ENCODE measurements at regions of chr17 and their contacts with region 1.

Region 1: DNA sequence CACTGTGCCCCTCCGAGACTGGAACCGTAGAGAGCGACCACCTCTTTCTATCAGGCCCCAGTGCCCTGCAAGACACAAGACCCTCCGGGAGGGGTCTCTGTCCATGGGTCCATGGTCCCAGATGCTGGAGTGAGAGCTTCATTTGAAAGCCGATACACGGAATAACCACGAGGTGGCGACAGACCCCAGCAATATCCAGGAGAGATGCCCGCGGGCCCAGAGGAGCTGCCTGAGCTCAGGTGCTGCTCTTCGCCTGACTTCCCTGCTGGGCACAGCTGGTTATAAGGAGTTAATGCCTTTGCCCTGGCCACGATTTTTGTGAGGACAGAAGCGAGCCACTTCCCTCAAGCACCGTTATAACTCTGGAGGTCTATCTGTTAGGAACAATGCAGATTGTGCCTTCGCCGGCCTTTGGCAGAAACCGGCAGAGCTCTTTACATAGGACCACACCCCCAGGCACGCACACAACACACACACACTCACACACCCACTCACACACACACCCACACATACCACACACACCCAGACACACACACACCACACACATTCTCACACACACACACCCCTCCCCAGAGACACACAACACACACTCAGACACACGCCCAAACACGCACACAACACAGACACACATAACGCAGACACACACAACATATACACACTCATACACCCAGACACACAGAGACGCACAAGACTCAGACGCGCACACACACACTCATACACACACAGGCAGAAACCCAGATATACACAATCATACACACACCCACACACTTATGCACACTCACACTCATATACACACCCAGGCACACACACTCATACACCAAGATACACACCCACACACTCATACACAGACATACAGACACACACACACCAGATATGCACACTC is 436.4 kb downstream of the SOX9 start:
- DNase-seq: peak; percentile 77
- H3K4me3 ChIP-seq: no peak overlapping the region
- H3K27ac ChIP-seq: no peak overlapping the region
- H3K4me1 ChIP-seq: peaks cover 5% of the 10 kb centered on the region
- H3K27me3 ChIP-seq: no peaks in the 10 kb centered on the region
- CTCF ChIP-seq: peak; percentile 74

Region 2: DNA sequence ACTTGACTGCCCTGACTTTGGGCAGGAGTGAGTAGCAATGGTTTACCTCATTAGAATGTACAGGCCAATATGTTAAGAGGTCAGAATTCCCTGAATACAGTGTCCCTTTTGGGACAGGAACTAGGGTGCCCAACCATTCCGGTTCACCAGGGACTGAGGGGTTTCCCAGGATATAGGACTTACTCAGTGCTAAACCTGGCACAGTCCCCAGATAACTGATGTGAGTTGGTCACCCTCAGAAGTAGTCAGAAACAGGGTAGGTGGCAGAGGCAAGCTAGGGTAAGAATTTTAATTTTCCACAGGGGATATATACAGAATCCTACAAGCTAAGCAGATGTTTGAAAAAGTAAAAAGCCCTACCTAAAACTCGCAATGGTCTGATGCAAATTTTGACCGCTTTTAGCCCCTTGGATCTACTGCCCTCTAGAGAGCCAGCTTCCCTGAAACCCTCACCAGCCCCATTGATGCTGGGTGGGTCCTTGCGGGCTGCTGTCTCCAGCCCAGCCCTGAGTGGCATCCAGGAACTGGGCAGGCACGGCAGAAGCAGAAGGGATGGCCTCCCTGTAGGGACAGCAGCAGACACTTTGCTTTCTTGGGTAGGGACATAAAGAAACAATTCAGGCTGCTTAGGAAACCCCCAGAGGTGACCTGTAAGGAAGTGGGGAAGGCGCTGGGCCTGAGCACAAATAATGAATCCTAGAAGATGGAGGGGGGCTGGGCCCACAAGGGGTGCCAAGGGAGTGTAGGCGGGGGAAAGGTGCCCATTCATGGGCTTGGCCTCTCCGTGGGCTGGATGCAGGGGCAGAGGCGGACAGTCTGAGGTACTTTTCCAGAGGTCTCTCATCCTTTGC is 100.5 kb after region 1 on chr17:
- intact Hi-C with region 1: loop called (anchors 5 kb)
- DNase-seq: peak; percentile 27
- H3K4me3 ChIP-seq: no peak overlapping the region
- H3K27ac ChIP-seq: no peak overlapping the region
- H3K4me1 ChIP-seq: no peaks in the 10 kb centered on the region
- H3K27me3 ChIP-seq: no peaks in the 10 kb centered on the region
- CTCF ChIP-seq: peak; percentile 26

Region 3: DNA sequence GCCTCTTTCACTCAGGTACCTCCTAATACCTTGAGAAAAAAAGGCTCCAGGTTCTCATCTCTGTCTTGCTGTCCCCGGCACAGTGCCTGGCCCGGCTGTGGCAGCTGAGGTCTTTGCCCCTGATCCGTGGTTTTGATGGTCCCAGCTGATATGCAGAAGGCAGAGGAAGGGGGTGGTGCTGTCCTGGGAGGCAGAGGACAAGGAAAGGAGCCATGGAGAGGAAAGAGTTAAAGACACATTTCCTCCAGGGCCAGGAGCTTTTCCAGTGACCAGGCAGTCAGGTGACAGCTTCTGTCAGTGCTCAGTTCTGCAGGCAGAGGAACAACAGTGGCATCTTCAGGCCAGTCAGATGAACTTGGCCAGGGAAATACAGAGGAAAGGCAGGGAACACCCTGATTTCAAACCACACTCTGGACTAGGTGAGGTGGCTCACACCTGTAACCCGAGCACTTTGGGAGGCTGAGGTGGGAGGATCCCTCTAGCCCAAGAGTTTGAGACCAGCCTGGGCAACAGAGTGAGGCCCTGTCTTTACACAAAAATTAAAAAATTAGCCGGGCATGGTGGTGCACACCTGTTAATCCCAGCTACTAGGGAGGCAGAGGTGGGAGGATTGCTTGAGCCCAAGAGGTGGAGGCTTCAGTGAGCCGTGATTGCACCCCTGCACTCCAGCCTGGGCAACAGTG is 632.4 kb after region 1 on chr17:
- intact Hi-C with region 1: loop called (anchors 10 kb)
- DNase-seq: no peak
- H3K4me3 ChIP-seq: no peak overlapping the region
- H3K27ac ChIP-seq: no peak overlapping the region
- H3K4me1 ChIP-seq: peaks cover 4% of the 10 kb centered on the region
- H3K27me3 ChIP-seq: no peaks in the 10 kb centered on the region
- CTCF ChIP-seq: peak; percentile 53

Region 4: DNA sequence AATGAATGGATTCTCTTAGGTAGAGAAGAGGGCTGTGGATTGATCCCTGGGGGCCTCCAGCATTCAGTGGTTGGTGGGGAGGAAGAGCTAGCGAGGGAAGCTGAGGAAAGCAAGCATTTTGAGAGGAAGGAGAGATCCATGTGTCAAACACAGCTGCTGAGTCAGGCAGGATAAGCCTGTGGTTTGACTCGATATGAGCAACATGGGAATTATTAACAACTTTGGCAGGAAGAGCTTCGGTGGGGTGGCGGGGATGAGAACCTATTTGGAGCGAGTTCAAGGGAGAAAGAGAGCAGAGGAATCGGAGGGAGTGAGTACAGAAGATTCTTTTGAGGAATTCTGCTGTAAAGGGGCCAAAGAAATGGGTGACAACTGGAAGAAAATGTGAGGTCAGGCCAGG is 814.1 kb after region 1 on chr17:
- intact Hi-C with region 1: loop called (anchors 10 kb)
- DNase-seq: no peak
- H3K4me3 ChIP-seq: no peak overlapping the region
- H3K27ac ChIP-seq: no peak overlapping the region
- H3K4me1 ChIP-seq: no peaks in the 10 kb centered on the region
- H3K27me3 ChIP-seq: no peaks in the 10 kb centered on the region
- CTCF ChIP-seq: no peak